ENCODE measurements at regions of chr11 and their contacts with region 1.

Region 1: DNA sequence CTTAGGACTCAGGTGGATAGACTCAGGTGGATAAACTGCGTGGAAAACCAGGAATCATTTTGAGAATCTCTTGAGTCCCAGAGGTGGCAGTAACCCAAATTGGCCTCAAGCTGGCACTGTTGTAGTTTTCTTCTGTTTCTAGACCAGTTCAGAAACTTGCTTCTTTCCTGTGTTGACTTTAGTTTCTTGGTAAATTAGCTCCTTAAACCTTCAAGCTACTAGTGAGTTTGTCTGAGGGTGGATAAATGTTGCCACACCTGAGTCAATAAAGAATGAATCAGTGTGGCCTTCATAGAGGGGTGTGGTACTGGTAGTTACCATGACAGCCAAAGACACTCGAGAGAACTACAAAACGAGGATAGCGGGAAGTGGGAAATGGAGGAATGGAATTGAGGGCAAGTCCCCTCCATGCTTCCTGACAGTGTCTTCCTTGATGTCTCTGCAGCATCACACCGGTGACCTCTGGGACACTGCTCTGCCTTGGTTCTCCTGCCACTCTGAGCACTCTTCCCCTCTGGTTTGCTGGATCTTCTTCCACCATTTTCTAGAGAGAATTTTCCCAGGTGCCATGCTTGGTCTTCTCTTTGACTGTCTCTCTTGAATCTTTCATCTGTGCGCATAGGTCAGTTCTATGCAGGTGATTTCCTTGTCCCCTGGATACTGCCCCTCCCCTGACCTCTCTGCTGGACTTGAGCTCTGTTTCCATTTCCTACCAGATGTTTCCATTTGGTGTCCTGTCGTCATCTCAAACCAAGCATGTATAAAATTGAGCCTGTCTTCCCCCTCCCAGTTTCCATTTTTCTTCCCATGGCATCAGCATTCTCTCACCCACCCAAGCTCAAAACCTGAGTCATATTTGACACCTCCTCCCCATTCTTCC is 7.2 kb downstream of the POLD4 start:
- DNase-seq: no peak
- ATAC-seq: peak; percentile 51
- H3K4me3 Mint-ChIP-seq: no peak overlapping the region
- H3K27ac Mint-ChIP-seq: peak overlapping the region; percentile 21
- H3K4me1 Mint-ChIP-seq: peaks cover 30% of the 10 kb centered on the region
- H3K27me3 Mint-ChIP-seq: no peaks in the 10 kb centered on the region

Region 2: GRCh38 chr11:67239783-67240575 is 106.2 kb before region 1 on chr11:
- CTCF ChIA-PET with region 1: interaction called, 10 read pairs
- POLR2A ChIA-PET with region 1: interaction called, 7 read pairs
- DNase-seq: peak; percentile 98
- ATAC-seq: peak; percentile 94
- H3K4me3 Mint-ChIP-seq: peak overlapping the region; percentile 100
- H3K27ac Mint-ChIP-seq: peak overlapping the region; percentile 98
- H3K4me1 Mint-ChIP-seq: peaks cover 45% of the 10 kb centered on the region
- H3K27me3 Mint-ChIP-seq: no peaks in the 10 kb centered on the region

Region 3: GRCh38 chr11:67265633-67266423 is 80.3 kb before region 1 on chr11:
- CTCF ChIA-PET with region 1: interaction called, 55 read pairs
- POLR2A ChIA-PET with region 1: interaction called, 3 read pairs
- DNase-seq: peak; percentile 79
- ATAC-seq: peak; percentile 46
- H3K4me3 Mint-ChIP-seq: peak overlapping the region; percentile 77
- H3K27ac Mint-ChIP-seq: peak overlapping the region; percentile 73
- H3K4me1 Mint-ChIP-seq: peaks cover 71% of the 10 kb centered on the region
- H3K27me3 Mint-ChIP-seq: no peaks in the 10 kb centered on the region

Region 4: GRCh38 chr11:67332081-67332691 is 14.0 kb before region 1 on chr11:
- CTCF ChIA-PET with region 1: interaction called, 196 read pairs
- POLR2A ChIA-PET with region 1: no interaction called
- DNase-seq: no peak
- ATAC-seq: no peak
- H3K4me3 Mint-ChIP-seq: no peak overlapping the region
- H3K27ac Mint-ChIP-seq: no peak overlapping the region
- H3K4me1 Mint-ChIP-seq: no peaks in the 10 kb centered on the region
- H3K27me3 Mint-ChIP-seq: no peaks in the 10 kb centered on the region

Region 5: GRCh38 chr11:67373925-67374618 is 27.9 kb after region 1 on chr11:
- CTCF ChIA-PET with region 1: interaction called, 998 read pairs
- POLR2A ChIA-PET with region 1: no interaction called
- DNase-seq: peak; percentile 63
- ATAC-seq: peak; percentile 48
- H3K4me3 Mint-ChIP-seq: peak overlapping the region; percentile 72
- H3K27ac Mint-ChIP-seq: peak overlapping the region; percentile 42
- H3K4me1 Mint-ChIP-seq: peaks cover 52% of the 10 kb centered on the region
- H3K27me3 Mint-ChIP-seq: peaks cover 53% of the 10 kb centered on the region

Region 6: GRCh38 chr11:67391304-67392132 is 45.4 kb after region 1 on chr11 and contains the start of gene RAD9A:
- CTCF ChIA-PET with region 1: interaction called, 998 read pairs
- POLR2A ChIA-PET with region 1: interaction called, 5 read pairs
- DNase-seq: peak; percentile 96
- ATAC-seq: peak; percentile 82
- H3K4me3 Mint-ChIP-seq: peak within 1 kb of the TSS; percentile 97
- H3K27ac Mint-ChIP-seq: peak within 1 kb of the TSS; percentile 83
- H3K4me1 Mint-ChIP-seq: peaks cover 51% of the 10 kb centered on the region
- H3K27me3 Mint-ChIP-seq: no peaks in the 10 kb centered on the region
- total RNA-seq, gene RAD9A: 59.5 to 60.4 TPM

Region 7: DNA sequence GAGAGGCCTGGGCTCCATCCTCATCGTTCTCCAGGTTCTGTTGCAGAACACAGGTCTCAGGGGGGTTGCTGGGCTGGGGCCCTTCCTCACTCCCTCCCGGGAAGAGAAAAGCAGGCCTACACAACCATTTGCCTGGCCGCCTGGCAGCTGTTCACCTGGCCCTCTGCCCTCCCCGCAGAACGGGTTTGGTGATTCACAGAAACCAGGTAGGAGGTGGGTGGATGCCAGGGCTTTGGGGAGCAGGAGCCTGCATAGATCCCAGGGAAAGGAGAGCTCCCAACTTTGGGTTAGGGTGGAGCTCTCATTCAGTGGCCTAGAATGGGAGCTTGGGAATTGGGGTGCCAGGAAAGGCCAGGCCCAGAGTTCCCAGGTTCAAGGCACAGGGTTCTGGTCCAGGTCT is 121.9 kb after region 1 on chr11:
- CTCF ChIA-PET with region 1: no interaction called
- POLR2A ChIA-PET with region 1: no interaction called
- DNase-seq: no peak
- ATAC-seq: no peak
- H3K4me3 Mint-ChIP-seq: peak overlapping the region; percentile 87
- H3K27ac Mint-ChIP-seq: peak overlapping the region; percentile 83
- H3K4me1 Mint-ChIP-seq: peaks cover 38% of the 10 kb centered on the region
- H3K27me3 Mint-ChIP-seq: no peaks in the 10 kb centered on the region

Region 8: DNA sequence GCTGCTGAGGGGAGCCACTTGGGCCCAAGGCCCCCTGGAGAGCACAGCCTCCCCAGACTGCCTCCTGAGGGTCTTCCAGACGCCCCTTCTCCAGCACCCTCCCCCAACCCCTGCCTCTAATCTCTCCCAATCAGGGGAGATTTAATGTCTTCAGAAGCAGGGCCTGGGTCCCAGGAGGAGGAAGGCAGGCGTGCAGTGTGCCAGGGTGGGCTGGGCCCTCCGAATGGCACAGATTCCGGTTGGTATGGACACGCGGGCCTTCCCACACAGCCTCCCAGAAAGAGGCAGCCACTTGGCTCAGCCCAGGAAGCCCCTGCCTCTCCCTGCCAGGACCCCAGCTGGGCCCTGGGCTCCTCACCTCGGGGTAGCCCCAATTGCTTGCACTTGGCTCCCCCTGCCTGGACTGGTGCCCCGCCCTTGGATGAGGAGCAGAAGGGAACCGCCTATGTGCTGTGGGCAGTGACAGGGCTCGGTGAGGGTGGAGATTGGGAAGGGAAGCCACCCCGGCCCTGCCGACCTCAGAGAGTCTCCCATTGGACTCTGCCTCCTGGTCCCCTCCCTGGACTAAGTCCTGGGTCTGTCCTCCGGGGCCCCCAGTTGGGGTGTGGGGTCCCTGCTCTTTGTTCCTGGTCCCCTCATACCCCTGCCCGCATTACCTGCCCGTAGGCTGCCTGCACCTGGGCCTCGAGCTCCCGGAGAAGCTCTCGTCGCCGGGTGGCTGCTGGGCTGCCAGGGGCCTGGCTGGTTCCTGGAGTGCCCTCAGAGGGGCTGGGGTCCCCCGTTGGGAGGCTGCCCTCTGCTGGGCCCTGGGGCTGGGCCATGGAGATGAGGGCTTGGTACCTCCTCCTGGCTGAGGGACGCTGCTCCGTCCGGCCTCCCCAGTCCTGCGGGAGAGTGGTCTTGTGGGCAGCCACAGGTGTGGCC is 177.7 kb after region 1 on chr11:
- CTCF ChIA-PET with region 1: no interaction called
- POLR2A ChIA-PET with region 1: no interaction called
- DNase-seq: no peak
- ATAC-seq: no peak
- H3K4me3 Mint-ChIP-seq: no peak overlapping the region
- H3K27ac Mint-ChIP-seq: no peak overlapping the region
- H3K4me1 Mint-ChIP-seq: no peaks in the 10 kb centered on the region
- H3K27me3 Mint-ChIP-seq: peaks cover 8% of the 10 kb centered on the region

Measured in activated CD8-positive, alpha-beta T cell treated with anti-CD3 and anti-CD28 coated beads, Interleukin-2, amount 10 ng/mL, durations not matched to agents 7 days and 5 days (primary cell).